Ascending aorta (tissue), 2 donors: ENCODE measurements at regions of chr12 and their contacts with region 1.

Region 1: DNA sequence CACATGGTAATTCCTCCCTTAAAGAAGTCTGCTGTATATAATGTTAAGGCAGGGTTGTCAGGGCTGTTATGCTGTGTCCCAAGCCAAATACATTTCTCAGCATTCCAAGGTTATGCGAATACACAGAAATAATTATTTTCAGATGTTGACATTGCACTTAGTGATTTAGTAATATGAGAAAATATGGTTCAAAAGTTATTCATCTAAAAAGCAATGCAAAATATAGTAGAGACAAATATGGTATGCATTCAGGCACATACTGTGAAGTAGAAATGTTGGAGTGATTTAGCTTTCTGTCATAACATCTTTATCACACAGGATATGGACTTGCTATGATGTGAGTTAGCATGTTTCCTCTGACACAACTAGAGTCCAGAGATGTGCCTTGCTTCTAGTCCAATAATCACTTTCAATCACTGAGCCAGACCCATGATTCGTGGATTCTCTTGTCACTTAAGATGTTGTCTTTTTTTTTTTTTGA is 70.0 kb downstream of the PDE3A start:
- DNase-seq: no peak
- H3K4me3 ChIP-seq: no peak overlapping the region
- H3K27ac ChIP-seq: peak overlapping the region; percentile 12 to 44
- H3K4me1 ChIP-seq: peaks cover 7 to 46% of the 10 kb centered on the region in 2 donors
- H3K27me3 ChIP-seq: no peaks in the 10 kb centered on the region
- CTCF ChIP-seq: no peak

Region 2: GRCh38 chr12:20142956-20143355 is 295.4 kb before region 1 on chr12:
- intact Hi-C with region 1: no loop called
- DNase-seq: no peak
- H3K4me3 ChIP-seq: no peak overlapping the region
- H3K27ac ChIP-seq: no peak overlapping the region
- H3K4me1 ChIP-seq: peaks cover 0 to 3% of the 10 kb centered on the region in 2 donors
- H3K27me3 ChIP-seq: no peaks in the 10 kb centered on the region
- CTCF ChIP-seq: no peak

Region 3: DNA sequence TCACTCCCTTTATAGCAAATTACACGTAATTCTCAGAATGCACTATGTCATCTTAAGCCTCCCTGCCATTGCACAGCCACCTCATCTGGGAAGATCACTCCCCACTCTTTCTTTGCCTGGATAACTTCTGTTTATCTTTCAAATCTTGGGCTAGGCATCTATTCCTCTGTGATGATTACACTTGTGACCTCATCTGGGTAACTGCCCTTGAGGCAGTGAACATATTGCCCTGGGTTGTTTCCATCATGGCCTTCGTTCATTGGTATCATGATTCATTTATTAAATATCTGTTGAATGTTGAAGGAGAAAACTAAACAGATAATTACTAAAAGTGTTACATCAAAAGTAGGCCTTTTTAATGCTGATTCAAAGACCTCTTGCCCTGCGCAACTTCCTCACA is 96.2 kb before region 1 on chr12:
- intact Hi-C with region 1: no loop called
- DNase-seq: no peak
- H3K4me3 ChIP-seq: no peak overlapping the region
- H3K27ac ChIP-seq: no peak overlapping the region
- H3K4me1 ChIP-seq: peaks cover 0 to 2% of the 10 kb centered on the region in 2 donors
- H3K27me3 ChIP-seq: no peaks in the 10 kb centered on the region
- CTCF ChIP-seq: no peak

Region 4: DNA sequence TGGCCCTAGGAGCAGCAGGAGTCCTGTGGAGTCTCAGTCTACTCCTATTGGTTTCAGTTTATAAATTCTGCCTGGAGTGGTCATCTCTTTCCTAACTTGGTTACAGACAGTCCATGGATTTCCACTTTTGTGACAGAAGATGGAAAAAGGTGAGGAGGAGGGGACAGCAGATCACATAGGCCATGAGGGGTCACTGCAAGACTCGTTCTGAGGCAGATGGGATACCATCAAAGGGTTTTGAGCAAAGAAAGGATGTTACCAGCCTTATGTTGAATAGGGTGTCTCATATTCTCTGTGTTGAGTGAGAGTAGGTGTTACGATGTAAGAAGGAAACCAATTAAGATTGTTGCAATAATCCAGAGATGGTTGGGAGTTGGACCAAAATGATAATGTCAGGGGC is 54.7 kb before region 1 on chr12:
- intact Hi-C with region 1: loop called (anchors 10 kb)
- DNase-seq: no peak
- H3K4me3 ChIP-seq: peak overlapping the region in 1 of 2 donors; percentile 30
- H3K27ac ChIP-seq: peak overlapping the region; percentile 52 to 57
- H3K4me1 ChIP-seq: peaks cover 0 to 8% of the 10 kb centered on the region in 2 donors
- H3K27me3 ChIP-seq: no peaks in the 10 kb centered on the region
- CTCF ChIP-seq: no peak